ENCODE measurements at regions of chr1 and their contacts with region 1.

Region 1: GRCh38 chr1:229964281-229964680 is 102.8 kb upstream of the GALNT2 start:
- DNase-seq: no peak
- H3K4me3 ChIP-seq: no peak overlapping the region
- H3K27ac ChIP-seq: no peak overlapping the region
- H3K4me1 ChIP-seq: no peaks in the 10 kb centered on the region
- H3K27me3 ChIP-seq: no peaks in the 10 kb centered on the region
- CTCF ChIP-seq: no peak
- POLR2A ChIP-seq: no peak

Region 2: GRCh38 chr1:230632273-230632873 is 668.1 kb after region 1 on chr1:
- intact Hi-C with region 1: loop called (anchors 5 kb)
- DNase-seq: no peak
- H3K4me3 ChIP-seq: no peak overlapping the region
- H3K27ac ChIP-seq: no peak overlapping the region
- H3K4me1 ChIP-seq: no peaks in the 10 kb centered on the region
- H3K27me3 ChIP-seq: no peaks in the 10 kb centered on the region
- CTCF ChIP-seq: no peak
- POLR2A ChIP-seq: no peak

Measured in vagina (tissue), 2 donors.